WTC11 (cell line): ENCODE measurements at regions of chr10 and their contacts with region 1.

Region 1: GRCh38 chr10:98309366-98310355 is 41.7 kb upstream of the LOXL4 start:
- DNase-seq: peak; percentile 81
- ATAC-seq: peak; percentile 92
- H3K4me3 Mint-ChIP-seq: peak overlapping the region; percentile 58
- H3K27ac Mint-ChIP-seq: peak overlapping the region; percentile 52; the same call in 1 of the 2 replicates
- H3K4me1 Mint-ChIP-seq: peaks cover 17% of the 10 kb centered on the region
- H3K27me3 Mint-ChIP-seq: no peaks in the 10 kb centered on the region
- CTCF ChIP-seq: peak; percentile 43

Region 2: GRCh38 chr10:98045785-98046389 is 263.8 kb before region 1 on chr10:
- CTCF ChIA-PET with region 1: interaction called, 14 read pairs
- POLR2A ChIA-PET with region 1: no interaction called
- DNase-seq: peak; percentile 73
- ATAC-seq: peak; percentile 92
- H3K4me3 Mint-ChIP-seq: no peak overlapping the region
- H3K27ac Mint-ChIP-seq: no peak overlapping the region
- H3K4me1 Mint-ChIP-seq: no peaks in the 10 kb centered on the region
- H3K27me3 Mint-ChIP-seq: peaks cover 28% of the 10 kb centered on the region
- CTCF ChIP-seq: peak; percentile 83

Region 3: DNA sequence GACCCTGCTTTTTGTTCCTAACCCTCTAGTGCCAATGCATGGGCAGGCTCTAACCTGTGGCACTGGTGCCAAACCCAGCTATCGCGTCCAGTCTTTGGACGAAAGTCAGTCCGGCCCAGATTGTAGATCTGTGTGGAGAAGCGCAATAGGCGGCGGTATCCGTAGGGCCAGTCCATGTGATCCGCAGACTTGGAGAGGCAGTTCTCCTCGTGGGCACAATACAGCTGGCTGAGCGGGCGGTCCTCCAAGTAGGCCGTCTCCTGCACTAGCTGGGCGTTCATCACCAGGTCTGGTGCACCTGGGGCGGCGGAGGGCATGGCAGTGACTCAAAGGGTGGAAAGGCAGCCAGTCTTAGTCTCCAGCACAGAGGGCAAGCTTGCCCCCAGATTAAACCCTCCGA is 56.2 kb before region 1 on chr10:
- CTCF ChIA-PET with region 1: interaction called, 11 read pairs
- POLR2A ChIA-PET with region 1: no interaction called
- DNase-seq: no peak
- ATAC-seq: no peak
- H3K4me3 Mint-ChIP-seq: no peak overlapping the region
- H3K27ac Mint-ChIP-seq: no peak overlapping the region
- H3K4me1 Mint-ChIP-seq: peaks cover 8% of the 10 kb centered on the region
- H3K27me3 Mint-ChIP-seq: no peaks in the 10 kb centered on the region
- CTCF ChIP-seq: no peak

Region 4: GRCh38 chr10:98295907-98296306 is 13.8 kb before region 1 on chr10:
- CTCF ChIA-PET with region 1: interaction called, 34 read pairs
- POLR2A ChIA-PET with region 1: no interaction called
- DNase-seq: no peak
- ATAC-seq: peak; percentile 45
- H3K4me3 Mint-ChIP-seq: no peak overlapping the region
- H3K27ac Mint-ChIP-seq: peak overlapping the region; percentile 20; the same call in 1 of the 2 replicates
- H3K4me1 Mint-ChIP-seq: peaks cover 19% of the 10 kb centered on the region
- H3K27me3 Mint-ChIP-seq: no peaks in the 10 kb centered on the region; the same call in 1 of the 2 replicates
- CTCF ChIP-seq: no peak

Region 5: DNA sequence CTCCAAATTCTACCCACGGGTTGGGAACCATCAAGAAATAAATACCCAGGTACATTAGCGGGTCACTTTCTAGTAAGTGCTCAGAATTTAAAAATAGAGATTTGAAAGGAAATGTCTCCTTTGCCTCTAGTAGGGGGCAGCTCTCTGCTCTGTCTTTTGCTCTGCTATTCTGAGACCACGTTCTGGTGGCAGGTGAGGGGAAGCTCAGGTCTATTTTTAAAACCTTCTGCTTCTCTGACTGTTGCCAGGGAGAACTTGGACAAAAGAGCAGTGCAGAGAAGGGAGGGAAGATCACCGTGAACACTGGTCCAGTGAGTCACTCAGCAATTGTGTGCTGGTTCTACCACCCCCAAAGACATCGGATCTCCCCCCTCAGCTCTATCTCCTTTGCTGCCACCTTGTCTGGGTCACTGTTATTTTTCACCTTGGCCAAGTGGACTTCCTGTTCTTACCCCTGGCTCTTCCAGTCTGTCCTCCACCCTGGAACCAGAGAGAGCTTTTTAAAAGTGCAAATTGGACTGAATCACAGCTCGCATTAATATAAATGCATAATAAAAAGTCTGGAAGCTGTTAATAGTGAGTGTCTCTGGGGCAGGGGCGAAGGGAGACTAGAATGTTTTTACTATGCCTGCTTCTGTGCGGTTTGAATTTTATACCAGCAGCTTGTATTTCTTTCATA is 30.7 kb after region 1 on chr10:
- CTCF ChIA-PET with region 1: interaction called, 13 read pairs
- POLR2A ChIA-PET with region 1: no interaction called
- DNase-seq: no peak
- ATAC-seq: no peak
- H3K4me3 Mint-ChIP-seq: no peak overlapping the region
- H3K27ac Mint-ChIP-seq: no peak overlapping the region
- H3K4me1 Mint-ChIP-seq: no peaks in the 10 kb centered on the region
- H3K27me3 Mint-ChIP-seq: no peaks in the 10 kb centered on the region
- CTCF ChIP-seq: no peak

Region 6: GRCh38 chr10:98425511-98426352 is 116.1 kb after region 1 on chr10:
- CTCF ChIA-PET with region 1: interaction called, 10 read pairs
- POLR2A ChIA-PET with region 1: no interaction called
- DNase-seq: peak; percentile 83
- ATAC-seq: peak; percentile 88
- H3K4me3 Mint-ChIP-seq: no peak overlapping the region
- H3K27ac Mint-ChIP-seq: no peak overlapping the region
- H3K4me1 Mint-ChIP-seq: no peaks in the 10 kb centered on the region
- H3K27me3 Mint-ChIP-seq: no peaks in the 10 kb centered on the region
- CTCF ChIP-seq: peak; percentile 82

Region 7: DNA sequence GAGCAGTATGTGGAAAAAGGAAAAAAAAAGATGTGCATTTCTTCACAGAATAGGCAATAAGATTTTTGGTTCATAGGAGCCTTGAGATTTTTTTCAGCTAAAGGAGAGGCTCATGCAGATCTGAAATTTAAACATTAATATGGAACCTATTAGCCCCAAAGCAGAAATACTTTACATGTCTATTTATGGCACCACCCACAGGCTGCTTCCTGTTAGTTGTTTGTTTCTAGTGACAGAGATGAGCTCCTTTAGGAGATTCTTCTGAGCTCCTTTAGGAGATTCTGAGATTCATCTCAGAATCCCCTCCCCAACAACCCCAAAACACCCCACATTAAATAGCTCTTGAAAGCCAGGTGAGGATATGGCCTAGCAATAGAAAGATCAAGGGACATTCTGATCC is 165.0 kb after region 1 on chr10:
- CTCF ChIA-PET with region 1: no interaction called
- POLR2A ChIA-PET with region 1: no interaction called
- DNase-seq: no peak
- ATAC-seq: no peak
- H3K4me3 Mint-ChIP-seq: no peak overlapping the region
- H3K27ac Mint-ChIP-seq: no peak overlapping the region
- H3K4me1 Mint-ChIP-seq: peaks cover 24% of the 10 kb centered on the region
- H3K27me3 Mint-ChIP-seq: peaks cover 10% of the 10 kb centered on the region
- CTCF ChIP-seq: no peak